ENCODE measurements at regions of chr7 and their contacts with region 1.

Region 1: GRCh38 chr7:33716581-33717477 is 188.5 kb upstream of the BMPER start:
- DNase-seq: peak; percentile 32

Region 2: DNA sequence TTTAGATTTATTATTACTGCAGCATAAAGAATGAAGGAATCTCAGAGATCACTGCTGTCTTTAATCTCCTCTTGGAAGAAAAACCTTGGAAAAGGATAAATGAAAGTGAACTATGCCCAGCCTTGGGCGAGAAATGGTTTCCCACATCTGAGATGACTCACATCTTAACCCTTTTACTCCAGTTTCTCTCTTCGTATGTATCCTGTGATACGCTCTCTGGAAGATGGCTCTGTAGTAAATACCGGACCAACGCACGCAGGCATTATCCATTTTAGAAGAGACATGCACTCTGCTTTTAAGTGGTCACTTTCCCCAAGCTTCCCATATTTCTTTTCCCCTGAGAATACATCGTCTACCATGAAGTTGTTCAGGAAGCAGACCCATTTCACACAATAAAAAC is 18.8 kb before region 1 on chr7:
- CTCF ChIA-PET with region 1: interaction called, 11 read pairs
- POLR2A ChIA-PET with region 1: interaction called, 3 read pairs
- DNase-seq: no peak

Region 3: GRCh38 chr7:33961948-33962347 is 245.1 kb after region 1 on chr7:
- CTCF ChIA-PET with region 1: no interaction called
- POLR2A ChIA-PET with region 1: no interaction called
- DNase-seq: no peak

Measured in HEK293T (cell line).